Endothelial cell of umbilical vein (primary cell): ENCODE measurements at regions of chr3 and their contacts with region 1.

Region 1: DNA sequence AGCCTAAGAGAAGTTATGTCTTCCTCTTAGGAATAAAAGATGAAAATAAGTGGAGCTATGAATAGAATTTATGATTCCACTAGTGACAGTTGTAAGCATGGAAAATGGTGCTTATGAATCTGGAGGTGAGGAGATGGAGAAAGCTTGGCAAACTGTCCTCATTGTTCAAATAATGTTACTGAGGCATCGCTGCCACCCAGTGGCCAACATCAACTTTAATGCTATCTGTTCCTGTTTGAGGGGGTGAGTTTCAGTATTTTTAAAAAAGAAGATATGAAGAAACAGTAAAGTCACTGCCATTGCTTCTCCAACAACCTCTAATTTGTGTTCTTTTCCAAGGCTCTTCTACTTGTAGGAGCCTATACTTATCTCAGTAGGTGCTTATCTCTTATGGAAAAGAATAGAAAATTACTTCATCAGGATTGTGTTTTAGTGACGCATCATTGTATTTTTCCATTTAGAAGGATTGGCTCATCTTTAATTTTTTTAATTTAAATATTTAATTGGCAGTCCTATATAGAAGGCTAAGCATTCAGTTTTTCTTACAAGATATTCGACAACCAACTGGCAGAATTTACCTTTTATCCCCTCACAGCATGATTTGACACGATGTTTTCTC is 260.4 kb upstream of the P2RY1 start:
- DNase-seq: peak; percentile 78
- H3K4me3 ChIP-seq: no peak overlapping the region
- H3K27ac ChIP-seq: no peak overlapping the region
- H3K4me1 ChIP-seq: no peaks in the 10 kb centered on the region
- H3K27me3 ChIP-seq: no peaks in the 10 kb centered on the region
- CTCF ChIP-seq: peak; percentile 41 to 45
- POLR2A ChIP-seq: no peak

Region 2: GRCh38 chr3:151925876-151926275 is 648.7 kb before region 1 on chr3:
- CTCF ChIA-PET with region 1: interaction called, 5 read pairs
- POLR2A ChIA-PET with region 1: no interaction called
- dilution Hi-C with region 1: no loop called
- intact Hi-C with region 1: loop called (anchors 5 kb)
- DNase-seq: peak; percentile 67
- H3K4me3 ChIP-seq: no peak overlapping the region
- H3K27ac ChIP-seq: peak overlapping the region; percentile 29
- H3K4me1 ChIP-seq: peaks cover 32% of the 10 kb centered on the region
- H3K27me3 ChIP-seq: no peaks in the 10 kb centered on the region
- CTCF ChIP-seq: no peak
- POLR2A ChIP-seq: no peak

Region 3: GRCh38 chr3:152466784-152467183 is 107.8 kb before region 1 on chr3:
- CTCF ChIA-PET with region 1: interaction called, 28 read pairs
- POLR2A ChIA-PET with region 1: no interaction called
- dilution Hi-C with region 1: no loop called
- intact Hi-C with region 1: no loop called
- DNase-seq: peak; percentile 49
- H3K4me3 ChIP-seq: no peak overlapping the region
- H3K27ac ChIP-seq: no peak overlapping the region
- H3K4me1 ChIP-seq: no peaks in the 10 kb centered on the region
- H3K27me3 ChIP-seq: no peaks in the 10 kb centered on the region
- CTCF ChIP-seq: peak; percentile 26 to 44
- POLR2A ChIP-seq: no peak

Region 4: GRCh38 chr3:152497457-152497856 is 77.1 kb before region 1 on chr3:
- CTCF ChIA-PET with region 1: no interaction called
- POLR2A ChIA-PET with region 1: no interaction called
- dilution Hi-C with region 1: no loop called
- intact Hi-C with region 1: no loop called
- DNase-seq: peak; percentile 31
- H3K4me3 ChIP-seq: no peak overlapping the region
- H3K27ac ChIP-seq: no peak overlapping the region
- H3K4me1 ChIP-seq: peaks cover 16% of the 10 kb centered on the region
- H3K27me3 ChIP-seq: no peaks in the 10 kb centered on the region
- CTCF ChIP-seq: no peak
- POLR2A ChIP-seq: no peak

Region 5: DNA sequence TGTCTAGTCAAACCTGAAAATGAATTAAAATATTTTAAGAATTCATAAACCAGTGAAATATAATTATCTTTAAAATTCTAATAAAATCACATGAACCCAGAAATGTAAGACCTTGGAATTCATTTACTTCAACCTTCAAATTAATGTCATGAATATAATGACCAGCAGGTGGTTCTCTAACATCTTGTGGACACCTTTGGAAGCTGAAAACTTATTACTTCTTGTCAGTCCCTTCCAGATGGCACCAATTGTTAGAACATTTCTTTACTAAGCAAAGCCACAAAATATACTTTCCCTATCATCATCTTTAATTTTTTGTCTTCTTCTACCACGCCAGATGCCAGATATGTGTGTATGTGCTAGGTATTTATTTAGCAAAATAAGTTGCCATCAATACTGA is 65.9 kb before region 1 on chr3:
- CTCF ChIA-PET with region 1: interaction called, 23 read pairs
- POLR2A ChIA-PET with region 1: no interaction called
- dilution Hi-C with region 1: no loop called
- intact Hi-C with region 1: no loop called
- DNase-seq: peak; percentile 44
- H3K4me3 ChIP-seq: no peak overlapping the region
- H3K27ac ChIP-seq: no peak overlapping the region
- H3K4me1 ChIP-seq: peaks cover 3% of the 10 kb centered on the region
- H3K27me3 ChIP-seq: no peaks in the 10 kb centered on the region
- CTCF ChIP-seq: no peak
- POLR2A ChIP-seq: no peak

Region 6: DNA sequence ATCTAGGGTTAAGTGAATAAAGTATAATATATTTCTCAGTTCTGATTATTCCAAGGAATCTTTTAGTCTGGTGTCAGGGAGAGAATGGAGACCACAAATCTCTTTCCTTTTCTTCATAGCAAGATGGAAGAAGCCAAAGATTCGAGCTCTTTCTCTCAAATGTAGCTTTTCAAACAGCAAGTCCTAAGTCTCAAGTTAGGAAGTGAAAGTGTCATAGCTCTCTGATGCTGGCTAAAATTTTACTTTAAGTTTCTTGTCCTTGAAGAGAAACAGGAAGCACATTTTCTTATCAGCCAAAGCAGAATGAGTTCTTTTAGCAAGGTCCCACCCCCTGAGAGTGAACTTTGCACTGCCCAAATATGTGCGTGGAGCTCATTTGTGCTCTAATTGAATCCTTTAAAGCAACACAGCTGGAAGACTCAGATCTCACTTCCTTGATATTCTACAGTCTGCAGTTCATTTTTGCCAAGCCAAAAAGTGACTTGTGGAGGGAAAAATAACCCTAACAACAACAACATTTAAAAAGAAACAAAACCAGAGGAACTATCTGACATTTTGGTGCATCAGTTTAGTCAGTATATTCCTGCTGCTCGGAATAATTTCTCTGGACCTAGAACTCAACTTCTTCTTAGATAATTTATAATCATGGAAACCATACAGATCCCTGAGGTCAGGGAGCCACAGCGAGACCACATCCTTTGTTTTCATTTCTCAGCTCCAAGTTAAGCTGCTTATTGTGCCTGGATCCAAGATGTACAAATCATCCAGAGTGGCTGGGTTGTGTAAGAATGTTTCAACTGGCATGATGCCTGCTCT is 21.6 kb after region 1 on chr3:
- CTCF ChIA-PET with region 1: interaction called, 16 read pairs
- POLR2A ChIA-PET with region 1: no interaction called
- dilution Hi-C with region 1: no loop called
- intact Hi-C with region 1: loop called (anchors 2 kb)
- DNase-seq: peak; percentile 97
- H3K4me3 ChIP-seq: peak overlapping the region in 1 of 3 experiments; percentile 42
- H3K27ac ChIP-seq: peak overlapping the region; percentile 78
- H3K4me1 ChIP-seq: peaks cover 14% of the 10 kb centered on the region
- H3K27me3 ChIP-seq: no peaks in the 10 kb centered on the region
- CTCF ChIP-seq: no peak
- POLR2A ChIP-seq: peak; percentile 55

Region 7: DNA sequence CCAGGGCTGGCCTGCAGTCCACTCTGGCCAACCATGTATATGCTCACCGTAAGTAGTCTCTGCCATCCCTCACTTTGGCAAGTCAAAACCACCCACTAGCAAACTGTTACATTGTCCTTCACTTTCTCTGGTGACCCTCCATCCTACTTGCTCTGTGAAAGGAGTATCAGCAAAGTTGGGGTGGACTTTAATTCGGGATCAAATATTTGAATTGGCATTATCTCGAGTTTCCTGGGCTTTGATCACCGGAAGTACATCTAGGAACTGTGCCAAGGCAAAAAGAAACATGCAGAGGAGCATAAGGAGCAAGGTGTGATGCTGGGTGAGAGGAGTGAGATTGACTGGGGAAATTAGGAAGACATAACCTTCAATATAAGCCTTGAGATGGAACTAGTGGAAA is 71.4 kb after region 1 on chr3:
- CTCF ChIA-PET with region 1: no interaction called
- POLR2A ChIA-PET with region 1: no interaction called
- dilution Hi-C with region 1: no loop called
- intact Hi-C with region 1: no loop called
- DNase-seq: no peak
- H3K4me3 ChIP-seq: no peak overlapping the region
- H3K27ac ChIP-seq: no peak overlapping the region
- H3K4me1 ChIP-seq: no peaks in the 10 kb centered on the region
- H3K27me3 ChIP-seq: no peaks in the 10 kb centered on the region
- CTCF ChIP-seq: no peak
- POLR2A ChIP-seq: no peak